WTC11 (cell line): ENCODE measurements at regions of chr6 and their contacts with region 1.

Region 1: DNA sequence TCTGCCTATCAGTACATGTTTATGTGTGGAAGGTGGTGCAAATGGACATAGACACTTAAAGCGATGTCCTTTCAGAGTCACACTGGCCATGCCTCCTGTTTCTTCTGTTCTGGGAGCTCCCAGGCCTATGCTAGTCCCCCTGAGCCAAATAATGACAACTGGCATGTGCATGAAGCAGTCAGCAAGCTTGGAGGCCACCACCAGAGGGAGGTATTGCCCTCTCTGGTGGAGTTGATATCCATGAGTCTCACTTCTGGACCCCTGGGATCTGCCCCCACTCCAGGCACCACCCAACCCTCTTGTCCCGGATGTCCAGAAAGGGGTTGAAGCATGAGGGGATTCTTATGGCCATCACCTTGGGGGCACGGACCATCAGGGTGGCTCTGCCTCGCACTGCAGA is 172.2 kb downstream of the AIG1 start:
- DNase-seq: peak; percentile 74
- ATAC-seq: peak; percentile 75
- H3K4me3 Mint-ChIP-seq: no peak overlapping the region
- H3K27ac Mint-ChIP-seq: no peak overlapping the region
- H3K4me1 Mint-ChIP-seq: peaks cover 23% of the 10 kb centered on the region
- H3K27me3 Mint-ChIP-seq: no peaks in the 10 kb centered on the region
- CTCF ChIP-seq: peak; percentile 54; the same call in 1 of the 2 replicates

Region 2: DNA sequence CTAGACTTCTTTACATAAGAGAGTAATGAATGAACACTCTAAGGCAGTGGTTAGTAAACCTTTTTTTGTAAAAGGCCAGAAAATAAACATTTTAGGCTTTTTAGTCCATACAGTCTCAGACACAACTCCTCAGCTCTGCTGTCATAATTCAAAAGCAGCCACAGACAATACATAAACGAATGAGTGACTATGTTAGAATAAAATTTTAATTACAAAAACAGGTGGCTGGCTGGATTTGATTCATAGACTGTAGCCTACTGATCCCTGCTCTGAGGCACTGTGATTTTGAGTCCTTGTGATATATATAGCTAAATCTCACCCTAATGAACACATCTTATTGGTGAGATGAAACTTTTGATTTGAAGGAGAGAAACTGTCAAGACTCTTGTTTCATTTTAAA is 17.1 kb before region 1 on chr6:
- CTCF ChIA-PET with region 1: interaction called, 21 read pairs
- POLR2A ChIA-PET with region 1: no interaction called
- DNase-seq: no peak
- ATAC-seq: no peak
- H3K4me3 Mint-ChIP-seq: no peak overlapping the region
- H3K27ac Mint-ChIP-seq: no peak overlapping the region
- H3K4me1 Mint-ChIP-seq: peaks cover 12% of the 10 kb centered on the region
- H3K27me3 Mint-ChIP-seq: no peaks in the 10 kb centered on the region
- CTCF ChIP-seq: no peak

Region 3: DNA sequence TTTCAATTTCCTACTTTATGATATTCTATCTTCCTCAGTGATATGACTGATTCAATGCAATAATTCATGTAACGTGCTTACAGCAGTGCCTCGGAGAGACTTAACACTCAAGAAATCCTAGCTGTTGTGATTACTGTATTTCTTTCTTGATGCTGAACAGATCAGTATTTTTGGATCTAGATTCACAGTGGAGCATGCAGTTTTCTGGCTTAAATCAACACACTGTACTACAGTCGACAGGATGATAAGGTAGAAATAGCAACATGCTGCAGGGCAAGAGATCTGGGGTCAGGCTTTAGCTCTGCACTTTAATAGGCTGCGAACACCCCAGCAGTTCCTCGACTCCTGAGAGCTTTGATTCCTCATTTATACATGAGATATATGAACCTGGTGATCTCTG is 11.2 kb before region 1 on chr6:
- CTCF ChIA-PET with region 1: interaction called, 21 read pairs
- POLR2A ChIA-PET with region 1: interaction called, 6 read pairs
- DNase-seq: no peak
- ATAC-seq: no peak
- H3K4me3 Mint-ChIP-seq: no peak overlapping the region
- H3K27ac Mint-ChIP-seq: no peak overlapping the region
- H3K4me1 Mint-ChIP-seq: peaks cover 31% of the 10 kb centered on the region
- H3K27me3 Mint-ChIP-seq: no peaks in the 10 kb centered on the region
- CTCF ChIP-seq: no peak

Region 4: DNA sequence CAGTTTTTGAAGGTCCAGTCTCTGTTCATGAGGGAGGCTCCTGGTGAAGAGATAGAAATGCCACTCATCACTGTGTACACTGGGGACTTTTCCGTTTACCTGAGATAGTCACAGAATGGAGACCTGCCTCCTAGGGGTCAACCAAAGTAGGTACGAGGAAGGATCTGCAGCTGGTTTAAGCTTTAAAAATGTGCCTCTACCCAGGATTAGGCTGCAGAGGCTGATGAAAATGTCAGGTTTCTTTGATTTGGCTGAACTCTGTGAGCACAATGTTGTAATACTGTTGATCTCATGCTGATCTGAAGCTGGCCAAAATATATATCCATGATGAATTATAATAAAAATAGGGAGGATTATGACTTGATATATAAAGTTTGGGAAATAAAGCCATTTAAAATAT is 34.9 kb after region 1 on chr6:
- CTCF ChIA-PET with region 1: interaction called, 11 read pairs
- POLR2A ChIA-PET with region 1: no interaction called
- DNase-seq: no peak
- ATAC-seq: peak; percentile 67
- H3K4me3 Mint-ChIP-seq: no peak overlapping the region
- H3K27ac Mint-ChIP-seq: no peak overlapping the region
- H3K4me1 Mint-ChIP-seq: peaks cover 18% of the 10 kb centered on the region
- H3K27me3 Mint-ChIP-seq: no peaks in the 10 kb centered on the region
- CTCF ChIP-seq: no peak

Region 5: DNA sequence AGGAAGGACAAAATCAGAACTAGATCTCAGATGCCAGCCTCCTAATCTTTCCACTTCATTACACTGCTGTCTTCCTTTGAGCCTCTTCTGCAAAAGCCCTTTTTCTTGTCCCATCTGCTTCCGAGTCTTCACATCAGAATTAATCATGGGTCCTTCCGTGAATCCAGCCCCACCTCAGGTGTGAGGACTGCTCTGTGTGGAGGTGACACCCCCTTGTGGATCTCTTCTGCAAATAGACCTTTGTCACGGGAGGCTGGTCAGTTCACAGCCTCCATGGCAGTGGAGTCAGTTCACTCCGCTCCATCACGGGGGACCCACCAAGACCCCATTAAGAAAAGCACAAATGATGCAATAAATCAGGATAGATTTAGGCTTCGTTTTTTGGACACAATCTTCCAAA is 46.5 kb after region 1 on chr6:
- CTCF ChIA-PET with region 1: interaction called, 18 read pairs
- POLR2A ChIA-PET with region 1: no interaction called
- DNase-seq: peak; percentile 41
- ATAC-seq: peak; percentile 96
- H3K4me3 Mint-ChIP-seq: no peak overlapping the region
- H3K27ac Mint-ChIP-seq: no peak overlapping the region
- H3K4me1 Mint-ChIP-seq: no peaks in the 10 kb centered on the region
- H3K27me3 Mint-ChIP-seq: no peaks in the 10 kb centered on the region
- CTCF ChIP-seq: no peak

Region 6: DNA sequence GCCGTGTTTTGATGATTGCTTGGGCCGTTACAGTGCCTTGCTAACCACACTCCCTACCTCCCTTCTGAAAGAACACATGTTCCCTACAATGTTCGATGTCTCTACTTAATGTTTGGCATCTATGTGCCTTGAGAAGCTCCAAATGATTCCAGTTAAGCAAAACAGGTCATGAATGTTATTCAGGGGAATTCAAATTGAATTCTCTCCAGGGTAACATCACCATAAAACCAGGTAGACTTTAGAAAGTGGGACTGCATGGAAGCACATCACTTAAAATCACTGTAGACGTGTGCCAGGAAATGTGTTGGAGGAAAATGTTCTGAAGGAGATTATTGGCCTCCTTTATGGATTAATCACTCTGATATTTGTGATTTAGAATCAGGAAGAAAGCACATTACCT is 89.5 kb after region 1 on chr6:
- CTCF ChIA-PET with region 1: no interaction called
- POLR2A ChIA-PET with region 1: no interaction called
- DNase-seq: no peak
- ATAC-seq: no peak
- H3K4me3 Mint-ChIP-seq: no peak overlapping the region
- H3K27ac Mint-ChIP-seq: no peak overlapping the region
- H3K4me1 Mint-ChIP-seq: no peaks in the 10 kb centered on the region
- H3K27me3 Mint-ChIP-seq: no peaks in the 10 kb centered on the region
- CTCF ChIP-seq: no peak

Region 7: GRCh38 chr6:143337201-143337949 is 104.5 kb after region 1 on chr6:
- CTCF ChIA-PET with region 1: interaction called, 68 read pairs
- POLR2A ChIA-PET with region 1: no interaction called
- DNase-seq: peak; percentile 95
- ATAC-seq: peak; percentile 99
- H3K4me3 Mint-ChIP-seq: no peak overlapping the region
- H3K27ac Mint-ChIP-seq: no peak overlapping the region
- H3K4me1 Mint-ChIP-seq: peaks cover 12% of the 10 kb centered on the region
- H3K27me3 Mint-ChIP-seq: no peaks in the 10 kb centered on the region
- CTCF ChIP-seq: peak; percentile 88

Region 8: GRCh38 chr6:143427109-143427817 is 194.4 kb after region 1 on chr6:
- CTCF ChIA-PET with region 1: interaction called, 18 read pairs
- POLR2A ChIA-PET with region 1: no interaction called
- DNase-seq: peak; percentile 84
- ATAC-seq: peak; percentile 100
- H3K4me3 Mint-ChIP-seq: no peak overlapping the region
- H3K27ac Mint-ChIP-seq: no peak overlapping the region
- H3K4me1 Mint-ChIP-seq: no peaks in the 10 kb centered on the region; the same call in 1 of the 2 replicates
- H3K27me3 Mint-ChIP-seq: no peaks in the 10 kb centered on the region
- CTCF ChIP-seq: peak; percentile 76

Region 9: GRCh38 chr6:143510991-143511891 is 278.4 kb after region 1 on chr6 and contains the start of gene FUCA2:
- CTCF ChIA-PET with region 1: no interaction called
- POLR2A ChIA-PET with region 1: no interaction called
- DNase-seq: peak; percentile 87
- ATAC-seq: peak; percentile 90
- H3K4me3 Mint-ChIP-seq: peak within 1 kb of the TSS; percentile 83
- H3K27ac Mint-ChIP-seq: peak within 1 kb of the TSS; percentile 82
- H3K4me1 Mint-ChIP-seq: peaks cover 25% of the 10 kb centered on the region
- H3K27me3 Mint-ChIP-seq: peaks cover 10% of the 10 kb centered on the region
- CTCF ChIP-seq: no peak
- total RNA-seq, gene FUCA2: 48.5 to 55.4 TPM (median 51.8 TPM) in 3 replicates